ENCODE measurements at regions of chr3 and their contacts with region 1.

Region 1: DNA sequence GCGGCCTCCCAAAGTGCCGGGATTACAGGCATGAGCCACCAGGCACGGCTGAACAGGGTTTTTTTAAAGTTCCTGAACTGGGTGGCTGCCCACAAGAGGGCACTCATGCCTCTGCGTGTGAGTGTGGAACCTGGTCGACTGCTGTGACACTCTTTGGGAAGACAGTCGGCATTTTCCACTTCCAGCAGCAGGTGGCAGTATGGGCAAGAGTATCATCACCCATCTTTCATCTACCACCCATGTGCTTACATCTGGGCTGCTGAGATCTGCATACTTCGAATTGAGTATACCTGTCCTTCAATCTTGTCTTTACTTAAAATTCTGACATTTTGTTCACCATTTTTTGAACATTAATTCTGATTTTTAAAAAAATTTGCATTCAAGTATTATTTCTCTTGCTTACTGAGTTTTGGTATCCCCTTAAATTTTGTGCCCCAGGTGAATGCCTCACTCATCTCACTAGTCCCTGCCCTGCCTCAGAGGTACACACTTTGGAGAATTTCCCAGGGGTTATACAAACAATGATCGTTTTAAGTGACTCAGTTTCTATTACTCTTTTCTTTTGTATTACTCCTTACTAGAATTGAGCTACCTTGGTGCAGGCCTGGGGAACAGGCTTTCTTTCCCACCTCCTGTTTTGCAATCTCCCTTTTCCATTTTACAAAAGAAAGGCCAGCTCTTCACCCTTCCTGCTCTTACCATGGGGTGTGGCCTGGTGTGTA is 11.8 kb downstream of the CLEC3B start:
- DNase-seq: peak; percentile 92 to 97 (median 94)
- H3K4me3 ChIP-seq: peak overlapping the region in 1 of 3 donors; percentile 12
- H3K27ac ChIP-seq: no peak overlapping the region
- H3K4me1 ChIP-seq: peaks cover 0 to 12% (median 0%) of the 10 kb centered on the region in 3 donors
- H3K27me3 ChIP-seq: no peaks in the 10 kb centered on the region
- CTCF ChIP-seq: peak; percentile 95

Region 2: GRCh38 chr3:45210308-45211041 is 172.6 kb after region 1 on chr3:
- intact Hi-C with region 1: loop called (anchors 5 kb)
- DNase-seq: peak; percentile 59 to 91 (median 67)
- H3K4me3 ChIP-seq: no peak overlapping the region
- H3K27ac ChIP-seq: no peak overlapping the region
- H3K4me1 ChIP-seq: no peaks in the 10 kb centered on the region
- H3K27me3 ChIP-seq: no peaks in the 10 kb centered on the region
- CTCF ChIP-seq: peak; percentile 77

Region 3: GRCh38 chr3:45398178-45398577 is 360.3 kb after region 1 on chr3:
- intact Hi-C with region 1: no loop called
- DNase-seq: no peak
- H3K4me3 ChIP-seq: no peak overlapping the region
- H3K27ac ChIP-seq: no peak overlapping the region
- H3K4me1 ChIP-seq: no peaks in the 10 kb centered on the region
- H3K27me3 ChIP-seq: no peaks in the 10 kb centered on the region
- CTCF ChIP-seq: no peak

Region 4: DNA sequence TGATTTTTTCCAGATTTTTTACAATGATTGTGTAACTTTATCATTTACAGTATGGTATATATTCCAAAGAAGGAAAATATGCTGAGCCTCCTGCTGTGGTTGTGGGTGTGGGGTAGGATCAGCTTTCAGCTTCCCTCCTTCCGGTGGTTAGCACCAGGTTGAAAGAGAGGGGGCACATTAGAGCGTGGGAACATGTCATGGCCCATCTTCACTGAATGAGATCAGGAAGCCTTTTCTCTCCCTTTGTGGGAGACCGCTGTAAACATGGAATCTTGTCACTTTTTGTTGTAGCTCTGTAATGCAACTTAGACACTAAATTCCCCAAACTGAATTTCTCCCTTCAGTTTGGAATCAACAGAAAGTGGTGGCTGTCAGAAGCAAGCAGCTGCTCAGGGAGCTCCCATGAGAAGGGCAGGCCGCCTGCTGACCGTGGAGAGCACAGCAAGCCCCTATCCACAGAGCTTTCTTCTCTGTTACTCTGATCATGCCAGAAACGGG is 470.0 kb after region 1 on chr3:
- intact Hi-C with region 1: loop called (anchors 10 kb)
- DNase-seq: peak in 4 of 5 donors; percentile 57 to 84 (median 74)
- H3K4me3 ChIP-seq: no peak overlapping the region
- H3K27ac ChIP-seq: no peak overlapping the region
- H3K4me1 ChIP-seq: peaks cover 6 to 13% (median 6%) of the 10 kb centered on the region in 3 donors
- H3K27me3 ChIP-seq: no peaks in the 10 kb centered on the region
- CTCF ChIP-seq: no peak